MCF 10A (cell line): ENCODE measurements at regions of chr7 and their contacts with region 1.

Region 1: GRCh38 chr7:94295850-94296249 is 98.8 kb upstream of the COL1A2 start:
- DNase-seq: peak; percentile 38
- H3K4me3 Mint-ChIP-seq: no peak overlapping the region
- H3K27ac Mint-ChIP-seq: no peak overlapping the region
- H3K4me1 Mint-ChIP-seq: peaks cover 28% of the 10 kb centered on the region
- H3K27me3 Mint-ChIP-seq: no peaks in the 10 kb centered on the region
- CTCF ChIP-seq: peak; percentile 37

Region 2: GRCh38 chr7:94324380-94325117 is 28.7 kb after region 1 on chr7:
- CTCF ChIA-PET with region 1: interaction called, 13 read pairs
- POLR2A ChIA-PET with region 1: no interaction called
- intact Hi-C with region 1: no loop called
- DNase-seq: no peak
- H3K4me3 Mint-ChIP-seq: no peak overlapping the region
- H3K27ac Mint-ChIP-seq: no peak overlapping the region
- H3K4me1 Mint-ChIP-seq: no peaks in the 10 kb centered on the region
- H3K27me3 Mint-ChIP-seq: no peaks in the 10 kb centered on the region
- CTCF ChIP-seq: no peak

Region 3: DNA sequence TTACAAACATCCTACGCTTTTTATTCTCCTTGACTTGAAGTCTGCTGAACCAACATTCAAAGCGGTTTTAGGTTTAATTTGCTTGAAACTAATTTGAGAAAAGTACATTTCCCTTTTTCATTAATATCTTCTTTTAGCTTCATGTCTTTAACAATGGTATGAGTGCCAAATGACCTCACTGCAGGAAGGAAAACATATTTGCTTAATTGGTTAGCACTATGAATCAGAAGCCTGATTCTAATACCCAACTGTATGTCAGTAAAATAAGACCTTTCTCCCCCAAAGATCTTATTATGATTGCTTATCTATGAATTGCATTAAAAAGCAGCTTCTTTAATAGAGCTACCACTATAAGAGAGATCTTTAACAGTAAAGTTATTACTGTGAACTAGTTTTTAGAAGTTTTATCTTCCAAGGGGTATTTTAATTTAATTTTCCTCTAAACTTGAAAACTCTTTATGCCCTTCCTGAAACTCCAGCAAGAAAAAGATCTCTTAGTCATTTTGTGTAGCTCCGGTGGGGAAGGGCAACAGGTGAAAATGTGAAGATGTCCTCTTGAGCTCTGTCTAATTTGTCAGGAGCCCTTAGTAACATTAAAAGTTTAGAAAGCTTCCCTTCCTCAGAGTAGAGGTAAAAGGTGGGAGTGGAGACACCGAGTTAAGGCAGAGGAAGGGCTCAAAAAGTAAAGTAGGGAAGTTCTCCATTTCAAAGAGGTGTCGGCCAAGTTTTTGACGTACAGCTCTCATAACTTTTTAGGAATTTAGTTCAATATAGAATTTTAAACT is 105.0 kb after region 1 on chr7:
- CTCF ChIA-PET with region 1: interaction called, 128 read pairs
- POLR2A ChIA-PET with region 1: interaction called, 11 read pairs
- intact Hi-C with region 1: no loop called
- DNase-seq: no peak
- H3K4me3 Mint-ChIP-seq: no peak overlapping the region
- H3K27ac Mint-ChIP-seq: no peak overlapping the region
- H3K4me1 Mint-ChIP-seq: no peaks in the 10 kb centered on the region
- H3K27me3 Mint-ChIP-seq: no peaks in the 10 kb centered on the region
- CTCF ChIP-seq: no peak

Region 4: GRCh38 chr7:94509264-94509878 is 213.5 kb after region 1 on chr7 and contains the start of gene CASD1:
- CTCF ChIA-PET with region 1: no interaction called
- POLR2A ChIA-PET with region 1: no interaction called
- intact Hi-C with region 1: no loop called
- DNase-seq: peak; percentile 46
- H3K4me3 Mint-ChIP-seq: peak within 1 kb of the TSS; percentile 69
- H3K27ac Mint-ChIP-seq: peak within 1 kb of the TSS; percentile 43
- H3K4me1 Mint-ChIP-seq: peaks cover 30% of the 10 kb centered on the region
- H3K27me3 Mint-ChIP-seq: no peaks in the 10 kb centered on the region
- CTCF ChIP-seq: no peak
- total RNA-seq, gene CASD1: 12.4 and 15.9 TPM in 2 replicates